CD4-positive, alpha-beta T cell (primary cell): ENCODE measurements at regions of chr1 and their contacts with region 1.

Region 1: GRCh38 chr1:117367047-117368018 is at the start of gene MAN1A2:
- DNase-seq: peak; percentile 47 to 87 (median 70)
- ATAC-seq: peak; percentile 62
- H3K4me3 ChIP-seq: peak within 1 kb of the TSS; percentile 69
- H3K4me3 Mint-ChIP-seq: peak within 1 kb of the TSS; percentile 97
- H3K27ac ChIP-seq: peak within 1 kb of the TSS; percentile 64 to 83
- H3K27ac Mint-ChIP-seq: peak within 1 kb of the TSS; percentile 98
- H3K4me1 ChIP-seq: peaks cover 35% of the 10 kb centered on the region
- H3K4me1 Mint-ChIP-seq: peaks cover 87% of the 10 kb centered on the region
- H3K27me3 ChIP-seq: no peaks in the 10 kb centered on the region
- H3K27me3 Mint-ChIP-seq: no peaks in the 10 kb centered on the region
- CTCF ChIP-seq: no peak
- total RNA-seq, gene MAN1A2: 45.6 to 49.7 TPM

Region 2: DNA sequence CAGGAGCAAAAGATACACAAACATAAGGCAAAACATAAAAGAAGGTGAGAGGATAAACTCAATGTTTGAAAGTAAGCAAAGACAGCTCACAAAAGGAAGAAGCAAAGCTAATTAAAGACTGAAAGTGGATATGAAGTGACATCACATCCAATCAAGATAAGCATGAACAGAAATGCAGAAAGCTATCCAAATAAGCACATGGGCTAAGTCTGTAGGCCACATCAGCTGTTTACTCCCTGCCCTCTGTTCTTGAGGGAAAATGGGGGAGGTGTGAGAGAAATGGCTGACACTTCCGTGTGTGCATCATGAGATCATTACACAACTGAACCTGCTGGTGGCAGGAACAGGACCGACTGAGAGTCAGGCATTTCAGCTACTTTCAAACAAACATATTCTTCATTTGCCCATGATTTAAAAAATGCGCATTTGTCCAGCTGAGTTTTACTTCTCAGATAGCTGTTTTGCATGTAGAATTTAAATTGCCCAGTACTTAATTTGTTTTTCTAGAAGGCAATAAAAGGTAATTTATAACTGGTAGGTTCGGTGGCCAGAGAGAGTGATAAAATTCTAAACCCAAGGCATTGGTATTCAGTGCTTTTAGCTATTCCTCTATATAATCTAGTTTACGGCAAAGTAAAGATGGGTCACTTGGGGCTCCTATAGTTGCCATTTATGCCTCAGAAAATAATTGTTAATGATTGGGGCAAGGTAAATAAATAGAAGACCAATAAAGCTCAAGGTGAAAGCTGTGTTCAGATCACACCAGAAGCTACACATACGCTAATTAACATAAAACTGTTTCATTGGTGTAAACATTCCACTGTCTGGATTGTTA is 27.2 kb before region 1 on chr1:
- CTCF ChIA-PET with region 1: interaction called, 3 read pairs
- POLR2A ChIA-PET with region 1: interaction called, 22 read pairs
- intact Hi-C with region 1: no loop called
- DNase-seq: peak in 5 of 14 experiments; percentile 11 to 71 (median 60)
- ATAC-seq: peak; percentile 89
- H3K4me3 ChIP-seq: no peak overlapping the region
- H3K4me3 Mint-ChIP-seq: no peak overlapping the region
- H3K27ac ChIP-seq: no peak overlapping the region
- H3K27ac Mint-ChIP-seq: peak overlapping the region; percentile 66
- H3K4me1 ChIP-seq: no peaks in the 10 kb centered on the region
- H3K4me1 Mint-ChIP-seq: peaks cover 24% of the 10 kb centered on the region
- H3K27me3 ChIP-seq: no peaks in the 10 kb centered on the region
- H3K27me3 Mint-ChIP-seq: no peaks in the 10 kb centered on the region
- CTCF ChIP-seq: peak; percentile 8

Region 3: GRCh38 chr1:117414943-117415342 is 47.6 kb after region 1 on chr1:
- CTCF ChIA-PET with region 1: no interaction called
- POLR2A ChIA-PET with region 1: no interaction called
- intact Hi-C with region 1: loop called in 1 of 2 experiments (anchors 5 kb)
- DNase-seq: no peak
- ATAC-seq: no peak
- H3K4me3 ChIP-seq: no peak overlapping the region
- H3K4me3 Mint-ChIP-seq: no peak overlapping the region
- H3K27ac ChIP-seq: no peak overlapping the region
- H3K27ac Mint-ChIP-seq: no peak overlapping the region
- H3K4me1 ChIP-seq: no peaks in the 10 kb centered on the region
- H3K4me1 Mint-ChIP-seq: peaks cover 37% of the 10 kb centered on the region
- H3K27me3 ChIP-seq: no peaks in the 10 kb centered on the region
- H3K27me3 Mint-ChIP-seq: no peaks in the 10 kb centered on the region
- CTCF ChIP-seq: no peak

Region 4: GRCh38 chr1:117664314-117664713 is 297.0 kb after region 1 on chr1:
- CTCF ChIA-PET with region 1: no interaction called
- POLR2A ChIA-PET with region 1: no interaction called
- intact Hi-C with region 1: loop called in 1 of 2 experiments (anchors 10 kb)
- DNase-seq: peak in 12 of 14 experiments; percentile 25 to 95 (median 54)
- ATAC-seq: peak; percentile 81
- H3K4me3 ChIP-seq: no peak overlapping the region
- H3K4me3 Mint-ChIP-seq: peak overlapping the region; percentile 13
- H3K27ac ChIP-seq: peak overlapping the region; percentile 27 to 76
- H3K27ac Mint-ChIP-seq: peak overlapping the region; percentile 82
- H3K4me1 ChIP-seq: peaks cover 70% of the 10 kb centered on the region
- H3K4me1 Mint-ChIP-seq: peaks cover 63% of the 10 kb centered on the region
- H3K27me3 ChIP-seq: no peaks in the 10 kb centered on the region
- H3K27me3 Mint-ChIP-seq: peaks cover 4% of the 10 kb centered on the region
- CTCF ChIP-seq: no peak

Region 5: DNA sequence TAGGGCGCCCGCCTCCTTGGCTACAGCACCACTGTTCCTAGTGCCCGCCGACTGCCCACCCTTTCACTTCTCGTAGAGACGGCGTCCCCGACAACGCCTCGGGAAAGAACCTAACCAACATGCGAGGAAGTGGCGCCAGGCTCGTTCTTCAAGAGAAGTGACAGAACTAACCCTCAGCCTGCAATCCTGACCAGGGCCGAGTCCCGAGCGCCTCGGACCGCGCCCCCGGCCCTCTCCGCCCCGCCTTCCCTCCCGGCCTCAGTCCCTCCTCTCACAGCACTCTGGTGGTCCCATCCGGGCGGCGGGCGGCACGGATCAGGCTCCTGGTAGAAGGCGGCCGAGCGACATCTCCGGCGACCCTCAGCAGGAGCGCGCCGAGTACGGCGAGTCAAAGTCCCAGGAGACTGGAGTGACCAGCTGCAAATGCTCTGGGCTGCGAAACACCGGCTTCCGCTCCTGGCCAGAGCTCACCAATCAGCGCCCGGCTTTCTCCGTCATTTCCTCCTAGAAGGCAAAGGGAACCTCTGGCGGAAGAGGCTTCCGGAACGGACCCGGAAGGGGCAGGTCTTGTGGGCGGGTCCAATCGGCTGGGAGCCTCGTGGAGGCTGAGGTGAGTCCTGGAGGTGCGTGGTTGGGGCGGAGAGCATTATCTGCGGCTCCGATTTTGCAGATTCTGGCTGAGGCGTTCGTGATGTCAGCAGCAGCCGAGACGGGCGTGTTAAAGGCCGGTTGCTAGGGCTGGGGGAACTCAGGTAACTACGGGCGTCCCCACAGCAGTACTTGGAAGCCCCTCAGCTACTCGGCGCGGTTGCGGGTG is 562.0 kb after region 1 on chr1 and contains the starts of genes GDAP2 and WDR3:
- CTCF ChIA-PET with region 1: no interaction called
- POLR2A ChIA-PET with region 1: interaction called, 3 read pairs
- intact Hi-C with region 1: loop called in 1 of 2 experiments (anchors 5 kb)
- DNase-seq: peak; percentile 87 to 98 (median 94)
- ATAC-seq: peak; percentile 94
- H3K4me3 ChIP-seq: peak within 1 kb of the TSS; percentile 89
- H3K4me3 Mint-ChIP-seq: peak within 1 kb of the TSS; percentile 96
- H3K27ac ChIP-seq: peak within 1 kb of the TSS; percentile 83 to 90
- H3K27ac Mint-ChIP-seq: peak within 1 kb of the TSS; percentile 92
- H3K4me1 ChIP-seq: peaks cover 21% of the 10 kb centered on the region
- H3K4me1 Mint-ChIP-seq: peaks cover 76% of the 10 kb centered on the region
- H3K27me3 ChIP-seq: no peaks in the 10 kb centered on the region
- H3K27me3 Mint-ChIP-seq: no peaks in the 10 kb centered on the region
- CTCF ChIP-seq: no peak
- total RNA-seq, gene GDAP2: 18.1 to 18.9 TPM
- total RNA-seq, gene WDR3: 5.8 to 7.5 TPM